ENCODE measurements at regions of chr6 and their contacts with region 1.

Region 1: GRCh38 chr6:117547688-117548621 is 54.4 kb downstream of the GOPC start:
- DNase-seq: peak; percentile 60
- ATAC-seq: peak; percentile 42
- H3K4me3 Mint-ChIP-seq: peak overlapping the region; percentile 67
- H3K27ac Mint-ChIP-seq: peak overlapping the region; percentile 62
- H3K4me1 Mint-ChIP-seq: peaks cover 39% of the 10 kb centered on the region
- H3K27me3 Mint-ChIP-seq: peaks cover 11% of the 10 kb centered on the region

Region 2: DNA sequence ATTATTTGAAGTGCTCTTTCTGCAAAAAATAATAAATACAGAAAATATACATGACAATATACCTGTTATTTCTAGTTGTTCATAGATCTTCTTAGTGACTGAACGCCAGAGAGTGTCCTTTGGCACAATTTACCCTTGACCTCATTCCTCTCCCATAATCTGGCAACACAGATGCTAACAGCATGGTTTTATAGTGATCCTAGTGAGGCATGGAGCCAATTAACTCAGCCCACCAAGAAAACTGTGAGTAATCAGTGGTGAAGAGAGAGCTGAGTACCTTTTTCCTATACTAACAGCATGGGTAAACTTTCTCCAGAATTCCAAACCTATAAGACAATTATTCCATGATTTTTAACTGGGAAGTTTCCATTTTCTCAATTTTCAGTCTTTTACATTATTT is 221.6 kb before region 1 on chr6:
- CTCF ChIA-PET with region 1: no interaction called
- POLR2A ChIA-PET with region 1: no interaction called
- intact Hi-C with region 1: no loop called
- DNase-seq: no peak
- ATAC-seq: no peak
- H3K4me3 Mint-ChIP-seq: no peak overlapping the region
- H3K27ac Mint-ChIP-seq: no peak overlapping the region
- H3K4me1 Mint-ChIP-seq: no peaks in the 10 kb centered on the region
- H3K27me3 Mint-ChIP-seq: peaks cover 14% of the 10 kb centered on the region

Region 3: DNA sequence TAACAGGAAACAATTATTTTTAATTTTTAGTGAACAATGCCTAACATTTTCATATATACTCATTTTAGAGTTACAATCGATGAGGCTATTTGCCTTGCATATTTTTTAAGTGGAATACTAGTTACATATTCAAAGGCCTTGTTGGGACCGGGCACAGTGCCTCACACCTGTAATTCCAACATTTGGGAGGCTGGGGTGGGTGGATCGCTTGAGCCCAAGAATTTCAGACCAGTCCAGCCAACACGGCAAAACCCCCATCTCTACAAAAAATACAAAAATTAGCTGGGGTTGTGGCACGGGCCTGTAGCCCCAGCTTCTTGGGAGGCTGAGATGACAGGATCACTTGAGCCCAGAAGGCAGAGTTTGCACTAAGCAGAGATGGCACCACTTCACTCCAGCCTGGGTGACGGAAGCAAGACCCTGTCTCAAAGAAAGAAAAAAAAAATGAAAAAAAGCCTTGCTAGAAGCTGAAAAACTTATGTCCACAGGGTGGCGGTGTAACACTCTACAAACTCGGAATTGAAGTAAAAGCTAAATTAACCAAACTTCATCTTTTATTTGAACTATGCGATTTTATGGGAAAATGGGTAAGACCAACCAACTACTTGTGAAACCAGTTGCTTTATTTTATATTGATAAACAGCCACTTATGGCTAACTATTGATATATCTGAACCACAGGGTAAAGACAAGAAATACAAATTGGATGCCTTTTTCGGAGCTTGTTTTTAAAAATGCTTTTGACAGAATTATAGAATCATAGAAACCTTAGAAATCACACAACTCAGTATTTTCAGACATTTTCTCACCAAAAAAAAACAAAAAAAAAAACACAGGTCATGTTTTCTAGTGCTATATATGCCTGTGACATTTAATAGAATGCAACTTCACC is 98.2 kb before region 1 on chr6:
- CTCF ChIA-PET with region 1: interaction called, 27 read pairs
- POLR2A ChIA-PET with region 1: no interaction called
- intact Hi-C with region 1: no loop called
- DNase-seq: peak; percentile 72
- ATAC-seq: no peak
- H3K4me3 Mint-ChIP-seq: no peak overlapping the region
- H3K27ac Mint-ChIP-seq: no peak overlapping the region
- H3K4me1 Mint-ChIP-seq: no peaks in the 10 kb centered on the region
- H3K27me3 Mint-ChIP-seq: peaks cover 12% of the 10 kb centered on the region

Region 4: DNA sequence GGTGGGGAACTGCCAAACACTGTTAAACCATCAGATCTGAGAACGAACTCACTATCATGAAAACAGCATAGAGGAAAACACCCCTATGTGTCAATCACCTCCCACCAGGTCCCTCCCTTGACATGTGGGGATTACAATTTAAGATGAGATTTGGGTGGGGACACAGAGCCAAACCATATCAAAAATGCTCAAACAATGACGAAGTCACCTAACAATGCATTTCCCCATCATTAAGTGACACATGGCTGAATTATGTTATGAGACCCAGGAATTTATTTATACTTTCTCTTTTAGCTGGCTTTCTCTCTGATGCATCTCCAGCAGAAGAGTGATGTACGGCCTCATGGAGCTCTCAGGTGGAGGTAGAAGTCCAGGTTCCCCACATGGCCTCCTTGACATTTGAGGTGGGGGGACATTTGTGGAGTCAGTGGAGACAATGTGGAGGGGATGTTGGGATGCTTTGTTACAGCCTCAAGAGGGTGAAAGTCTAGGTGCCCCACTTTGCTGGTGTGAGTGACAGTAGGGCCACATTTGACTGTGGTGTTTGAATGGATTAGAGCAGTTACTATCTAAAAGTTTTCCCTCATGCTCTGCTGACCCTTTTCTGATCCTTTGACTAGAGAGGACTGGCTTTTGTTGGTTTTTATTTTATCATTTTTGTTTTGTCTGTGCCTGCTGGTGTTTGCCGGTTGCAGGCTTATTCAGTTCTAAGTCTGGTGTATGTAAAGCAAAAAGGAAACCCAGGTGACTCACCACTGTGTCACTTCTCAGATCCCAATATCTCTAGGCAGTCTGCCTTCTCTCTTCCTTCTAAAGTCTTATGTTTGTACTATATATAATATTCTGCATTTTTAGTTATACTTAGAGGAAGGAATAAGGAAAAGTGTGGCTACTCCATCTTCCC is 83.9 kb before region 1 on chr6:
- CTCF ChIA-PET with region 1: interaction called, 3 read pairs
- POLR2A ChIA-PET with region 1: no interaction called
- intact Hi-C with region 1: loop called in 1 of 2 experiments (anchors 5 kb)
- DNase-seq: peak; percentile 40
- ATAC-seq: peak; percentile 98
- H3K4me3 Mint-ChIP-seq: no peak overlapping the region
- H3K27ac Mint-ChIP-seq: peak overlapping the region; percentile 30
- H3K4me1 Mint-ChIP-seq: peaks cover 19% of the 10 kb centered on the region
- H3K27me3 Mint-ChIP-seq: peaks cover 21% of the 10 kb centered on the region

Region 5: GRCh38 chr6:117568831-117569410 is 21.0 kb after region 1 on chr6:
- CTCF ChIA-PET with region 1: interaction called, 4 read pairs
- POLR2A ChIA-PET with region 1: no interaction called
- intact Hi-C with region 1: loop called (anchors 1 to 2 kb)
- DNase-seq: no peak
- ATAC-seq: peak; percentile 96
- H3K4me3 Mint-ChIP-seq: no peak overlapping the region
- H3K27ac Mint-ChIP-seq: no peak overlapping the region
- H3K4me1 Mint-ChIP-seq: peaks cover 14% of the 10 kb centered on the region
- H3K27me3 Mint-ChIP-seq: no peaks in the 10 kb centered on the region